Vagina (tissue), 2 donors: ENCODE measurements at regions of chr5 and their contacts with region 1.

Region 1: DNA sequence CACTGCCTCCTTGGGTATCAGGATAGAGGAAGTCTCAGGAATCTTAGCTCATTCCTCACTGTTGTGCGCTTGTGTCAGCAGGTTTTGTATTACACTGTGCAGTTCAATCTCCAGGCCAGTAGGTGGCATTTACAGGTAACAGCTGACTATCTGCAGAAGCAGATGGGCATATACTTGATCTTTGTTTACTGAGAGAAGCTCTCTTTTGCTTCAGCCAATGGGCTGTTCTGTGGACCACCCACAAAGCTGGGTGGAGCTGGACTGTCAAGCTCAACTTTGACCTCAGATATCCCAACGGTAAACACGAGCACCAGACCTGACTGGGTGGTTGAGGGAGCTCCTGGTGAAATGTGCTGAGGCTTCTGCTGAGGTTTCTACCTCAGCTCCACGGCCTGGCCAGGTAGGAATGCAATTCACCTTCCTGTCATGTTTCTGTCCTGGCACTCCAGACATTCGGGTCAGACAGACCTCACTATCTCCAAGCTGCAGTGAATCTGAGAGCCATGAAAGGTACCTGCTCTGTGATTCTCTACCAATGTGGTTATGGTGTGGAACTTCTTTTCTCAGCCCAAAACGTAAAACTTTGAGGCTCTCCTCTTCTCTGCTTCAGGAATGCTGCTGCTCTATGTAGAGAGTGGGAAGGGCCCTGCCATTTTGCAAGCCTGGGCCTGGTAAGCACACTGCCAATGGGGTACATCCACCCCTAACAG is 167.9 kb upstream of the ACTBL2 start:
- DNase-seq: no peak
- H3K4me3 ChIP-seq: no peak overlapping the region
- H3K27ac ChIP-seq: no peak overlapping the region
- H3K4me1 ChIP-seq: no peaks in the 10 kb centered on the region
- H3K27me3 ChIP-seq: no peaks in the 10 kb centered on the region
- CTCF ChIP-seq: no peak
- POLR2A ChIP-seq: no peak

Region 2: DNA sequence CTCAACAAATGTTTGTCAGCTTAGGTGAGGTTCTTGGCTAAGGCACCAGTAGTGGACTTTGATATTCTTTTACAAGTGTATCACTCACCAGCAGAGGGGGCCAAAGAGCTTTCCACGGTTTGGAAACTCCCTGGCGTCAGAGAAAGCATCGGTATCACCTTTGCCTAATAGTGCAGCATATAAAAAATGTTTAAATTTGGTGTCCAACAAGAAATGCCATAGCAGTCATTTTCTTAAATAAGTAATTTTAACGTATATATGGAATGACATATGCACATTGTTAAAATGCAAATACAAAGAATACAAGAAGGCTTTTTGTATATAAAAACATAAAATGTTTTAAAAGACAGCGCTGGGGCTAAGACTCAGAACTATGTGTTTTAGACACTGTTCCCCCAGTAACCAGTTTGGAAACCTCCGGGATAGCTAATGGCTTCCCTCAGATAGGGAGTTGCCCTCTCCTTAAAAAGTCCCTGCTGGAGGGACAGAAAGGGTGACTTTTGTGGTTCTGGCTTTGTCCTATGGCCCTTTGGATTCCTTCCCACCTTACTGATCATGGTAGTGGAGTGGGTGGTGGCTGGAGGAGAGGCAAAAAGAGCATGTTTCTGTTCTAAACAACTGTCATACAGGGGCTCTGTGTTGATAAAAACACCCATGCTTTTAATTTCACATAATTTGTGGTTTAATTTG is 352.1 kb before region 1 on chr5:
- intact Hi-C with region 1: loop called (anchors 5 kb)
- DNase-seq: peak in 1 of 2 donors; percentile 88
- H3K4me3 ChIP-seq: no peak overlapping the region
- H3K27ac ChIP-seq: peak overlapping the region; percentile 2
- H3K4me1 ChIP-seq: peaks cover 10% of the 10 kb centered on the region
- H3K27me3 ChIP-seq: no peaks in the 10 kb centered on the region
- CTCF ChIP-seq: peak; percentile 75 to 80 (median 75)
- POLR2A ChIP-seq: no peak

Region 3: GRCh38 chr5:57825031-57825683 is 174.6 kb after region 1 on chr5:
- intact Hi-C with region 1: no loop called
- DNase-seq: no peak
- H3K4me3 ChIP-seq: no peak overlapping the region
- H3K27ac ChIP-seq: no peak overlapping the region
- H3K4me1 ChIP-seq: no peaks in the 10 kb centered on the region
- H3K27me3 ChIP-seq: no peaks in the 10 kb centered on the region
- CTCF ChIP-seq: no peak
- POLR2A ChIP-seq: no peak